ENCODE measurements at regions of chr1 and their contacts with region 1.

Region 1: DNA sequence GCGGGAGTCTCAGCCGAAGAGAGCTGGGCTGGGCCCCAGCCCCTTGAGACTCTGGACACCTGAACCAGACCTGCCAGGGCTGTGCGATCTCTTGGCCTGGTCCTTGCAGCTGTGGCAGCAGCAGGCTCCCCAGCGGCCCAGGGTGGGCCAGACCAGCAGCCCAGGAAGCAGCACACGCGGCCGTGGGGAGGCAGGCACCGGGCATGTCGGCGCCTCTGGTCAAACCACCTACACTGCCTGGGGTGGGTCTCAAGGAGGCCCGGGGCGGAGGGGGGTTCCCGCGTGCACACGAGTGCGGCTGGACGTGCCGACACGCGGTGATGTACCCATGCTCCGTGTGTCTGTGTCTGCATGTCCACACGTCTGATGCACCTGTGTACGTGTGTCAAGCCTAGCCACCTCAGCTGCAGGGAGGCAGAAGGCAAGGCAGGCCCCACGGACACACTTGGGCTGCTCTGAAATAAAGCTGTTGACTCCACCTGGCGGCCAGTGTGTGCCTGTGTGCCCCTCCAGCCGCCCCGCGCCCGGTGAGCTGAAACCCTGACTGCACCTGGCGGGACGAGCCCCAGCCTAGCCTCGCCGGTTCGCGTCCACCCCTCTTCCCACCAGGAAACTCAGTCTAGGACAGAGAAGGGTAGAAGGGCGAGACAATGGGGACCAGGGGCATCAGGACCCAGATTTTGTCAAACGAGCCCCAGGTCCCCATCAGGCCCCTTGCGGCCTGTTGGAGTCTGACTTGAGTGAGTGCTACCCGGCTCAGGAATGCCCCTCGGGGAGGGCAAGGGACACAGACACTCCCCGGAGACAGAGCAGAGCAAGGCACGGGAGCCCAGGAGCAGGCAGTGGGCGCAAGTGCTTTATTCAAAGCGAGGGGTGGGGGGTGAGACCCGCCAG is 11.6 kb downstream of the SCNN1D start:
- H3K4me3 ChIP-seq: no peak overlapping the region
- H3K27ac ChIP-seq: no peak overlapping the region
- H3K4me1 ChIP-seq: no peaks in the 10 kb centered on the region
- CTCF ChIP-seq: peak; percentile 91

Region 2: DNA sequence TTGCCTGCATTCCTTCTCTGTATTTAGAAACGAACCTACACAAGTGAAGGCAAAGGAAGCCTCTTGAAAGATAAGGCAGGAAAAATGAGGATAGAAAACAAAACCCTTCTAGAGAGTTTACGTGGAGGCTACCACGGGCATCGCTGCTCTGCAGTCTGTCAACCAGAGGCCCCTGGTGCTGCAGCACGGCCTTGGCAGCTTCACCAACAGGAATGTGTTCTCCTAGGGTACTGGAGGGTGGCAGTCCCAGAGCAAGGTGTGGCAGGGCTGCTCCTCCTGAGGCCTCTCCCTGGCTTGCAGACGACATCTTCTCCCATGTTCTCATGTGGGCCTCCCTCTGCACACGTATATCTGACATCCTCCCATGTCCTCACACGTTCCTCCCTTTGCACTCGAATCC is 425.7 kb before region 1 on chr1:
- CTCF ChIA-PET with region 1: no interaction called
- POLR2A ChIA-PET with region 1: no interaction called
- H3K4me3 ChIP-seq: no peak overlapping the region
- H3K27ac ChIP-seq: no peak overlapping the region
- H3K4me1 ChIP-seq: no peaks in the 10 kb centered on the region
- CTCF ChIP-seq: no peak

Region 3: GRCh38 chr1:983799-984473 is 307.9 kb before region 1 on chr1:
- CTCF ChIA-PET with region 1: interaction called, 26 read pairs
- POLR2A ChIA-PET with region 1: interaction called, 3 read pairs
- H3K4me3 ChIP-seq: no peak overlapping the region
- H3K27ac ChIP-seq: no peak overlapping the region
- H3K4me1 ChIP-seq: no peaks in the 10 kb centered on the region
- CTCF ChIP-seq: peak; percentile 54

Region 4: GRCh38 chr1:1115786-1116700 is 175.8 kb before region 1 on chr1 and contains the start of gene C1orf159:
- CTCF ChIA-PET with region 1: interaction called, 76 read pairs
- POLR2A ChIA-PET with region 1: interaction called, 3 read pairs
- H3K4me3 ChIP-seq: peak within 1 kb of the TSS; percentile 83
- H3K27ac ChIP-seq: no peak within 1 kb of the TSS; the same call in 1 of the 2 replicates
- H3K4me1 ChIP-seq: no peaks in the 10 kb centered on the region
- CTCF ChIP-seq: 0 out of 2 replicates have a peak, but pooled peaks have one; percentile 22

Region 5: GRCh38 chr1:1237874-1238701 is 53.7 kb before region 1 on chr1:
- CTCF ChIA-PET with region 1: no interaction called
- POLR2A ChIA-PET with region 1: no interaction called
- H3K4me3 ChIP-seq: no peak overlapping the region
- H3K27ac ChIP-seq: no peak overlapping the region; the same call in 1 of the 2 replicates
- H3K4me1 ChIP-seq: no peaks in the 10 kb centered on the region; the same call in 1 of the 2 replicates
- CTCF ChIP-seq: no peak

Region 6: GRCh38 chr1:1273512-1274298 is 18.1 kb before region 1 on chr1 and contains the start of gene UBE2J2:
- CTCF ChIA-PET with region 1: interaction called, 10 read pairs
- POLR2A ChIA-PET with region 1: interaction called, 12 read pairs
- H3K4me3 ChIP-seq: peak within 1 kb of the TSS; percentile 89
- H3K27ac ChIP-seq: peak within 1 kb of the TSS; percentile 86
- H3K4me1 ChIP-seq: 0 out of 2 replicates have a peak, but pooled peaks cover 4% of the 10 kb centered on the region
- CTCF ChIP-seq: no peak

Region 7: GRCh38 chr1:1302006-1302430 is 10.2 kb after region 1 on chr1:
- CTCF ChIA-PET with region 1: interaction called, 16 read pairs
- POLR2A ChIA-PET with region 1: interaction called, 9 read pairs
- H3K4me3 ChIP-seq: no peak overlapping the region
- H3K27ac ChIP-seq: no peak overlapping the region
- H3K4me1 ChIP-seq: peaks cover 20% of the 10 kb centered on the region
- CTCF ChIP-seq: peak; percentile 56; the same call in 1 of the 2 replicates